ENCODE measurements at regions of chr2 and their contacts with region 1.

Region 1: GRCh38 chr2:217248312-217248935 is 388.6 kb upstream of the TNP1 start:
- DNase-seq: peak; percentile 94
- H3K4me3 ChIP-seq: peak overlapping the region in 1 of 4 donors; percentile 8
- H3K27ac ChIP-seq: peak overlapping the region; percentile 83 to 94 (median 88)
- H3K4me1 ChIP-seq: peaks cover 0 to 65% (median 58%) of the 10 kb centered on the region in 4 donors
- H3K27me3 ChIP-seq: no peaks in the 10 kb centered on the region
- CTCF ChIP-seq: no peak
- EP300 ChIP-seq: peak in 1 of 4 donors; percentile 67
- POLR2A ChIP-seq: peak in 1 of 2 donors; percentile 34

Region 2: DNA sequence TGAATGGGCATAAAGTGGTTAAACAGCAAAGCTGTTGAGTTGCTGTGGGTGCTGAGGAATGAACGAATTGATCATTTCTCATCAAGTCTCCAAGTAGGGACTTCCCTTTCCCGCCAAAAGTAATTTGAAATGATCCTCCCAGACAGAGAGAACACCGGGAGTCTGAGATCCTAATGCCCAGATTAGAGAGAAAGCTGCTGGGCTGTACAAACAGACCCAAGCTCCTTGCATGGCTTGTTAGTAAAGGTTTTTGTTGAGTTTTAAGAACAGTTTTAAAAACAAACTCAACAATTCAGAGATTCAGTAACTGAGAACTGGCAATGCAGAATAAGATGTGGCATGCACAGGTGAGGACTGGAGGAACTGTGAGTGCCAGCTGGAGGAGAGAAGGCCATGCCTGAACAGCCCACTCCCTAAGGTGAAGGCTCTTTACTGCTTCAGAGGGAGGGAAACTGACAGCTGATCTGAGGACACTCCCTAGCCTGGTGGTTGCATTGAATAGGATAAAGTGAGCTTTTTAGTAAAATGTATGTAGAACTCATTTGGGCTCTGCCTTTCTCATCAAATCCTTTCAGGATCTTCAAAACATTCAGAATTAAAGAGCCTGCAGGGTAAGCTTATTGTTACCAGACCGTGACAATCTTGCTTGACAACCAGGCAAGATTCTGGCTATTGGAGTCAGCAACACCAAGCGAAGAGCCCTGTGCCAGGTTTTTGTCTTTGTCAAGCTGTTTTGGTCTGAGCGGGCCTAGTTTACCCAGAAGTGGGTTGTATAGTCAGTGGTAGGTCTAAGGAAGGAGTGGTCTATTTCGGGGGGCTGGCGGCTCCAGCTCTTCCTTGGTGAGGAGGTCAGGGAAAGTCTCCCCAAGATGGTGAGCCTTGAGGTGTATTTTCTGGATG is 489.9 kb before region 1 on chr2:
- intact Hi-C with region 1: loop called (anchors 5 kb)
- DNase-seq: no peak
- H3K4me3 ChIP-seq: no peak overlapping the region
- H3K27ac ChIP-seq: peak overlapping the region in 3 of 4 donors; percentile 73 to 82 (median 73)
- H3K4me1 ChIP-seq: peaks cover 0 to 89% (median 82%) of the 10 kb centered on the region in 4 donors
- H3K27me3 ChIP-seq: no peaks in the 10 kb centered on the region
- CTCF ChIP-seq: no peak
- EP300 ChIP-seq: no peak
- POLR2A ChIP-seq: no peak

Region 3: DNA sequence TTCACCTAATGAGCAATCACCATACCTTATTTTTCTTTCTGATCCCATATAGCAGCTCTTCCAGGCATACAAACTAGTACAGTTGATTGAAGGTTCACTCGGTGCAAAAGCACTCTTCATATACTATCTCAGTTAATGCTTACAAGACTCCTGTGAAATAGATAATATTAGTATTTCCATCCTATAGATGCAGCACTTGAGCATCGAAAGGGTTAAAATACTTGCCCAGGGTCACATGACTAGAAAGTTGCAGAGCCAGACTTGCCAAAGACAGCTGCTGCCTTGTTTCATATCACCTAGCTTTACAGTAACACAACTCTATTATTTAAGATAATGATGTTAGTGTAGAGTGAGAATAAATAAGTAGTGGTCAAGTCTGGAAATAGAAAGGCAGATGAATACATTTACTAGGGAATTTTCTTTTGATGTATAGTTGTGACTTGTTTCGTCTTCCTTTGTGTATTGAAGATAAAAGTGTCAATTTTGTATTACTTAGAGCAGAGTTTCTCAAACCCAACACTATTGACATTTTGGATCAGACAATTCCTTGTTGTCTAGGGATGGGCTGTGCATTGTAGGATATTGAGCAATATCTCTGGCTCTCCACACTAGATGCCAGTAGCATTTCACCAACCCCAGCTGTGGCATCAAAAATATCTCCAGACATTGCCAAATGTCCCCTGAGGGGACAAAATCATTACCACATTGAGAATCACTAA is 77.6 kb after region 1 on chr2:
- intact Hi-C with region 1: loop called (anchors 5 kb)
- DNase-seq: no peak
- H3K4me3 ChIP-seq: no peak overlapping the region
- H3K27ac ChIP-seq: peak overlapping the region in 1 of 4 donors; percentile 81
- H3K4me1 ChIP-seq: peaks cover 0 to 43% (median 37%) of the 10 kb centered on the region in 4 donors
- H3K27me3 ChIP-seq: no peaks in the 10 kb centered on the region
- CTCF ChIP-seq: no peak
- EP300 ChIP-seq: no peak
- POLR2A ChIP-seq: no peak

Region 4: DNA sequence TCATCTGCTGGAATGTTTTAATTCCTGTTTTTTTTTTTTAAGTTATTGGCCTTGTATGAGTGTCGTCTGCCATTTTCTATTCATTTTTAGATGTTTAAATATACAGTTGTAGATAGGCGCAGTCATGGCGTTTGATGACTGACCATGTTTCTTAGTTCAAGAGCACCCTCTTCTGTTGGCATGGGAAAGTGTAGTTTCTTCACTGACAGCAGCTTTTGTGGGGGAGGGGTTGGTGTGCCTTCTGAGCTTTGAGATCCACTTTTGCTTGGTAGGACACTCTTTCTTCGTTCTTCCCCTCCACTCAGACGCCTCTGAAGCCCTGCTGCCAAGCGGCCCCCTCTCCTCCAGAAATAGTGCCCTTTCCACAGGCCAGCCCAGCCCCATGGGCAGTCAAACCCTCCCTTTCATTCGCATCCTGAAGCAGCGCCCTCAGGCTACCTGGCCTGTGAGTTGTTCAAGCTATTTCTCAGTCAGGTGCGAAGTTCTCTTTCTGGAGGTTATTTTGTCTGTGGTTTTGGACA is 262.4 kb after region 1 on chr2:
- intact Hi-C with region 1: loop called (anchors 10 kb)
- DNase-seq: peak; percentile 85
- H3K4me3 ChIP-seq: no peak overlapping the region
- H3K27ac ChIP-seq: peak overlapping the region in 3 of 4 donors; percentile 3 to 39 (median 18)
- H3K4me1 ChIP-seq: peaks cover 0 to 39% (median 15%) of the 10 kb centered on the region in 4 donors
- H3K27me3 ChIP-seq: no peaks in the 10 kb centered on the region
- CTCF ChIP-seq: peak; percentile 58 to 88 (median 82)
- EP300 ChIP-seq: peak in 1 of 4 donors; percentile 24
- POLR2A ChIP-seq: no peak

Region 5: DNA sequence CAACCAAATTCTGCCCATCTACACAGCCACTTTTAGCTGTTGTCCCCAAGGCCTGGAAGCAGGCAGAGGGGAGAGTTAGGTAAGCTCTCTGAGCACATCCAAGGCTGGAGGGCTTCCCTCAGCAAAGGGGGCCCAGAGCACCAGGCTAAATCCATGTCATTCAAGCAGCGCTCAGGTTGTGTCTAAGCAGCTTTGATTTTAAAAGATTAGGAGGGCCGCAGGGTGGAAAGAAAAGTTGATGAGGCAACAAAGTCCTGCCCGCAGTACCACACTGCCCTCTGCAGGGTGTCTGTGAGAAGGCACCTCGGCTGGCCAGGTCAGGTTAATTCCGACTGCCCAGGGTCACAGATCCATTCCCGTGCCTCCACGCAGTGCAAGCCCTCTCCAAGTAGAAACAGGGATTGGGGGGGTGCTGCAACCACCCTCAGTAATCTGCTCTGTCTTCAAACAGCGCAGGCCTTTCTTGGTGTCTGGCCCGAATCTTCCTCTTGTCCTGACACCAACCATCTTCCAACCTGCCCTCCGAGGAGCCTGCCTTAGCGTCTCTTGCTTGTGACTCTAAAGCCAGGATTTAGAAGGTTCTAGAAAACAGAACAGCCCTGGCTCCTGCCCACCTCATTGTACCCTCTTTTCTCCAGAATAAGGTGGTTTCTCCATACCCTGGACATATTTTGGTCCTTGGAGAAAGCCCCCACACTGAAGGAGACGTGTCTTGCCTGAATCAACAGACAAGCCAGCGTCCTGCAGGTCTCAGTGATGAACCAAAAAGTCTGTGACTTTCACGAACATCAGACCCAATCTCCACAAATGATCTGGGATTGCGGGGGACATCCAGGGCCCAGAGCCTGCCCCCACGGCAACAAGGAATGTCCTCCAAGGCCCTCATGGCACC is 465.2 kb after region 1 on chr2:
- intact Hi-C with region 1: loop called (anchors 10 kb)
- DNase-seq: peak; percentile 91
- H3K4me3 ChIP-seq: no peak overlapping the region
- H3K27ac ChIP-seq: peak overlapping the region; percentile 50 to 76 (median 72)
- H3K4me1 ChIP-seq: peaks cover 0 to 48% (median 43%) of the 10 kb centered on the region in 4 donors
- H3K27me3 ChIP-seq: no peaks in the 10 kb centered on the region
- CTCF ChIP-seq: peak; percentile 93 to 99 (median 95)
- EP300 ChIP-seq: no peak
- POLR2A ChIP-seq: no peak

Measured in sigmoid colon (tissue), 7 donors.